Caco-2 (cell line): ENCODE measurements at regions of chr1 and their contacts with region 1.

Region 1: GRCh38 chr1:5718831-5719632 is 273.2 kb downstream of the NPHP4 start:
- DNase-seq: peak in 1 of 2 experiments; percentile 17
- H3K4me3 ChIP-seq: no peak overlapping the region
- H3K4me3 Mint-ChIP-seq: no peak overlapping the region
- H3K27ac Mint-ChIP-seq: peak overlapping the region; percentile 95
- H3K4me1 ChIP-seq: peaks cover 30% of the 10 kb centered on the region
- H3K4me1 Mint-ChIP-seq: peaks cover 6% of the 10 kb centered on the region
- H3K27me3 ChIP-seq: no peaks in the 10 kb centered on the region
- H3K27me3 Mint-ChIP-seq: no peaks in the 10 kb centered on the region
- CTCF ChIP-seq: no peak

Region 2: DNA sequence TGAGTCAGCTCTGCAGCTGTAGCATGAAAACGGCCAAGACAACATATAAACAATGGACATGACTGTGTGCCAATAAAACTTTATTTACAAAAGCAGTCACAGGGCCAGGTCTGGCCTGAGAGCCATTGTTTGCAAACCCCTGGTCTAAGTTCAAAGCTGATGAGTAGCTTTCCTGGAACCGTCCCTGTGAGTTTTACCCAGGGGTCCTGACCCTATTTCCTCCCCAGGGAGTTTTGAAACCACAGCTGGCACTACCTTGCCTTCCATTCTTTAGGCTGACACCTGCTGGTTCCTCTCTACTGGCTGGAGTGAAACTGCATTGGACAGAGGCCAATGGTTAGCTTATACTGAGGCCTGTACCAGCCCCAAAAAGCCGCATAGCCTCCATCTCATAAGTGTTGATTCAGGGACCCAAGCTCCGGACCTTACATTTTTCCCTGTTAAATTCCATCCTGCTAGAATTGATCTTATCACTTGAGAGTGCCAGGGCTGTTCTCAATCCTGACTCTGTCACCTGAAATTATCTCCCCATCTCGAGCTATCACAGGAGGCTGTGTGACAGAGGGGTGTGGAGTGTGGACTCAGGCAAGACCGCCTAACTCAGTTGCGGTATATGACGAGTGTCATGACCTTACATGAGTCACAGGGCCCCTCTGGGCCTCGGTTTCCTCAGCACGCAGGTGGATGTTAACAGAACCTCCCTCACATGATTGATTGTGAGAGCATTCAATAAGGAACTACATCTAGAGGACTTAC is 70.4 kb before region 1 on chr1:
- CTCF ChIA-PET with region 1: no interaction called
- POLR2A ChIA-PET with region 1: no interaction called
- intact Hi-C with region 1: loop called (anchors 5 kb)
- DNase-seq: no peak
- H3K4me3 ChIP-seq: no peak overlapping the region
- H3K4me3 Mint-ChIP-seq: no peak overlapping the region
- H3K27ac Mint-ChIP-seq: peak overlapping the region; percentile 67
- H3K4me1 ChIP-seq: peaks cover 27% of the 10 kb centered on the region
- H3K4me1 Mint-ChIP-seq: peaks cover 14% of the 10 kb centered on the region
- H3K27me3 ChIP-seq: no peaks in the 10 kb centered on the region
- H3K27me3 Mint-ChIP-seq: no peaks in the 10 kb centered on the region
- CTCF ChIP-seq: no peak

Region 3: DNA sequence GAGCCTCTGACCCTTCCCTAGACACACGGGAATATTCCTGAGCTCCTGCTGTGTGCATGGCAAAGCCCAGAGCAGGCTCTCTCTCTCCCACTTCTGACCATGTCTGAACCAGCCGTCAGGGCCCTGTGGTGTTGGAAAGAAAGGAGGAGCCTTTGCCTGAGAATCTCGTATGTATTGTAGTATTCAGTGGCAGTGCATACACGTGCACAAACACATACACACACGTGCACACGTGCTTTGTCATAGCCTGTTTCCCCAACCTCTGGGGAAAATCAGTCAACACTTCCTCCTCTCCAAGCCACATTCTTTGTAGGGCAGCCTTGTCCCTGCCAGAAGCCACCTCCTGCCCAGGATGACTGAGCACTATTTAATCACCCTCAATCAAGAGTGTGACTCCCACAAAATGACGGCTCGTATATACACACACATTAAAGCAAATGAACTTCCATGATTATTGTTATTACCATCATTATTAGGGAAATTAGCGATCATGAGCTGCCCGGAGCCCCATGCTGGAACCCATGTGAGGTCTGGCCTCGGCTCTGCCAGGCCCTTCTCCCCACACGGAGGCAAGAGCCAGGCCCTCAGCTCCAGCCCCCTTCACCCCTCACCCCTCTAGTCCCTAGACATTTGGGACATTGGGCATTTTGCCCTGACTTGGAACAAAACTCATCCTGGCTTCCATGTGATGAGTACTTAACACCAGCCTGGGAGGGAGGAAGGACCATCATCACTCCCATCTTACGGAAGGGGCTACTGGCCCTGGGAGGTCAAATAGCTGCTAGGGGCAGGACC is 58.7 kb before region 1 on chr1:
- CTCF ChIA-PET with region 1: no interaction called
- POLR2A ChIA-PET with region 1: no interaction called
- intact Hi-C with region 1: no loop called
- DNase-seq: no peak
- H3K4me3 ChIP-seq: no peak overlapping the region
- H3K4me3 Mint-ChIP-seq: no peak overlapping the region
- H3K27ac Mint-ChIP-seq: no peak overlapping the region
- H3K4me1 ChIP-seq: no peaks in the 10 kb centered on the region
- H3K4me1 Mint-ChIP-seq: no peaks in the 10 kb centered on the region
- H3K27me3 ChIP-seq: no peaks in the 10 kb centered on the region
- H3K27me3 Mint-ChIP-seq: no peaks in the 10 kb centered on the region
- CTCF ChIP-seq: no peak